Activated naive CD4-positive, alpha-beta T cell treated with anti-CD3 and anti-CD28 coated beads for 36 hours (primary cell): ENCODE measurements at regions of chr5 and their contacts with region 1.

Region 1: GRCh38 chr5:175696139-175696854 is 38.4 kb downstream of the HRH2 start:
- DNase-seq: peak; percentile 95
- H3K4me3 Mint-ChIP-seq: peak overlapping the region; percentile 74
- H3K27ac Mint-ChIP-seq: peak overlapping the region; percentile 95
- H3K4me1 Mint-ChIP-seq: peaks cover 29% of the 10 kb centered on the region
- H3K27me3 Mint-ChIP-seq: no peaks in the 10 kb centered on the region

Region 2: DNA sequence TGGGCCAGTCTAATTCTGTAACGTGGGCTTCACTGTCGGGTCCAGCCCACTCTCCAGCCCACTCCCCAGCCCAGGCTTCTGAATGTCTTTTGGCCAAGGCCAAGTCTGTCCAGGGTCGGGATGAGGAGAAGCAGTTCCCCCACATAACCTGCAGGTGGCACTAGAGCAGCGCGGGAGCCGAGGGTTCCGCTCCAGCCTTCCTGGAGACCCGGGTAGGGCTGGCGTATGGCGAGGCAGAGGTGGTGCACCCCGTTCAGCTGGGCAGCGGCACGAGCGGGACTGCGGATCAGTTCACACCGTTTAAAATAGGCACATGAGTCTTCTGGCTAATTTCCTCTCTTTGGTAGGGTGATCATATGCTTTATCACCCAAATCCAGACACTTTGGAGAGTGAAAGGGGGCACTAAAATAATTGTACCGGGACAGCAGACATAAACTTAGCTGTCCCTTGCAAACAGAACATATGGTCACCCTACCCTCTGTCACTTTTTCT is 786.0 kb before region 1 on chr5:
- CTCF ChIA-PET with region 1: no interaction called
- intact Hi-C with region 1: loop called (anchors 10 kb)
- DNase-seq: peak; percentile 68
- H3K4me3 Mint-ChIP-seq: no peak overlapping the region
- H3K27ac Mint-ChIP-seq: no peak overlapping the region
- H3K4me1 Mint-ChIP-seq: no peaks in the 10 kb centered on the region
- H3K27me3 Mint-ChIP-seq: peaks cover 23% of the 10 kb centered on the region

Region 3: DNA sequence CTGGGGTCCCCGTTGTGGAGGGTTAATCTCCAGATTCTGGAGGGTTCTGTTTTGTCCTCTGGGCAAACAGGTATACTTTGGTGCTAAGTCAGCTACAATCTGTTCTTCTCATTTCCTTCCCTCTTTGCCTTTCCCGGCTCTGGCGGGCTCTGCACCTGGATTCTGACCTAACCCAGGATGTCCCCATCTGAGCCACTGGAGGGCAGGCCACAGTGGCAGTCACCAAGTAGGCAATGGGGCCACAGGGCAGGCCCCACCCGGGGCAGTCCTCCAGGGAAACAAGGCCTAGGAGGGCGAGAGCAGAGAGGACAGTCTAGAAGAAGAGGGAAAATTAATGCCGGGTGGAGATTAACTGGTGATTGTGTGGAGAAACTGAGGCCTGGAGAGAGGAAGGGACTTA is 78.8 kb before region 1 on chr5:
- CTCF ChIA-PET with region 1: interaction called, 3 read pairs
- intact Hi-C with region 1: loop called (anchors 1 kb)
- DNase-seq: peak; percentile 9
- H3K4me3 Mint-ChIP-seq: no peak overlapping the region
- H3K27ac Mint-ChIP-seq: no peak overlapping the region
- H3K4me1 Mint-ChIP-seq: peaks cover 15% of the 10 kb centered on the region
- H3K27me3 Mint-ChIP-seq: no peaks in the 10 kb centered on the region

Region 4: GRCh38 chr5:175657593-175658271 is 38.6 kb before region 1 on chr5 and contains the start of gene HRH2:
- CTCF ChIA-PET with region 1: interaction called, 4 read pairs
- intact Hi-C with region 1: loop called (anchors 1 kb)
- DNase-seq: peak; percentile 74
- H3K4me3 Mint-ChIP-seq: peak within 1 kb of the TSS; percentile 90
- H3K27ac Mint-ChIP-seq: peak within 1 kb of the TSS; percentile 72
- H3K4me1 Mint-ChIP-seq: peaks cover 79% of the 10 kb centered on the region
- H3K27me3 Mint-ChIP-seq: no peaks in the 10 kb centered on the region
- total RNA-seq, gene HRH2: 8.7 to 10.0 TPM

Region 5: DNA sequence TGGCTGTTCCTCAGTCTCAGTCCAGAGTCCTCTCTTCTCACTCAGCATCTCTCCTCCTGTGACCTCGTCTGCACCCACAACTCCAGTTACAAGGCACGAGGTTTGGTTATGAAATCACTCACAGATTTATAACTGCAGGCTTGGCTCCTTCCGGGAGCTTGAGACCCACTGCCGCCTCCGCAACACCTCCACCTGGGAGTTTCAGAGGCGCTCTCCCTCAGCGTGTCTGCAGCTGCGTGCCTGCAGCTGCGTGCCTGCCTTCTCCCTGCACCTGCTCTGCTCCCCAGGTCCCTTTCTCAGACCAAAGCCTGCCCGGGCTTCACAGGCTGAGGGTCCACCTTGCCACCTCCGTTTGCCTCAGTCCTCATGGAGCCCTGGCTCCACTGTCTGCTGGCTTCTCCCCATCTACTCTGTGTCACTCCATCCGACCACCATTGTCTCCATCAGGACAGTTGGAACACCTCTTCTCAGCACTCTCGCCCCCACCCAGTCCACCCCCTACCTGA is 13.0 kb after region 1 on chr5:
- CTCF ChIA-PET with region 1: interaction called, 17 read pairs
- intact Hi-C with region 1: no loop called
- DNase-seq: no peak
- H3K4me3 Mint-ChIP-seq: no peak overlapping the region
- H3K27ac Mint-ChIP-seq: no peak overlapping the region
- H3K4me1 Mint-ChIP-seq: no peaks in the 10 kb centered on the region
- H3K27me3 Mint-ChIP-seq: no peaks in the 10 kb centered on the region

Region 6: DNA sequence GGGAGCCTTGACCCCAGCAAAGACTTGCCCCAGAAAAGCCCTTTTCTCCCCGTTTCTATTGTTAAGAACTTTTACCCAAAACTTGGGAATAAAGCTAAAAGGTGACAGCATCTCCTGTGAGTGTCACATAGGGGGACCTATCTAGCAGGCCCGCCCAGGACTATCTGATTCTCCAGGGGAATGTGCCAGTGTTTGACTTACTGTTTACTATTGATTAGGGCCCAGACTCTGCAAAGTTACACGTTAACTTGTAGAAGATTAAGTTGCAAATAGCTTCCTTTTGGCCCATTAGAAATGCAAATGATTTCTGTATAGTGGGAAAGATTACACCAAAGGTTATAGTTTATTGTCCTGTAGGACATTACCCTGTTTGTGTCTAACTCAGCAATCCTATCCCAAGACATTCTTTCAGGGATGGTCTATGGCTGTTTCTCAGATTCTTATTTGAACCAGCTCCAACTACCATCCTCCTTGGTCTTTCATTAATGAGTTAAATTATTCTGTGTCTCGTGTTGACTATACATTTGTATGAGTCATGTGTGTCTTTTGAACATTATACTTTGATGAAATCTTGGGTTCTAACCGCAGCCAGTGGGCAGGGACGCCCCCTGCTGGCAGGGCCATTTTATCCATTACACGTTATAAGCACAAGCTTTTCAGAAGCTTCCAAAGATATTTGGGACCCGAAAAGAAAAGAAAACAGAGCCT is 22.3 kb after region 1 on chr5:
- CTCF ChIA-PET with region 1: interaction called, 21 read pairs
- intact Hi-C with region 1: loop called (anchors 1 kb)
- DNase-seq: peak; percentile 86
- H3K4me3 Mint-ChIP-seq: no peak overlapping the region
- H3K27ac Mint-ChIP-seq: no peak overlapping the region
- H3K4me1 Mint-ChIP-seq: peaks cover 6% of the 10 kb centered on the region
- H3K27me3 Mint-ChIP-seq: no peaks in the 10 kb centered on the region